GM12878 (cell line): ENCODE measurements at regions of chr1 and their contacts with region 1.

Region 1: DNA sequence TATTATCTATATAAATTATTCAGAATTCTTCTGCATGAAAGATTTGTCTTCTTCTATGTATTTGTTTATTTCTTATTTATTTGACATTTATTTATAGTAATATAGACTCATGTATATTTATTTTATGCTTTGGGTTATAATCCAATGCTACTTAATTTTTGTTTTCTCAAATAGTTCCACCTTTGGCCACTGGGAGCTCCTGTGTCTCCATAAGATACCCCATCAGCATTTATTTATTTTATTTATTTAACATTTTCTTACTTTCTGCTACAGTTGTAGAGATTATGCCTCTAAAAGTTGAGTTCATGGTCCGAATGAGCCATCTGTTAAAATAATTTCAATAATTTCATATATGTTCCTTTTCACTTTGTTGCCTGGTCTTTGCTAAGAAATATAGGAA is 289.4 kb downstream of the ADGRL2 start:
- DNase-seq: no peak
- ATAC-seq: peak; percentile 65
- H3K4me3 ChIP-seq: no peak overlapping the region
- H3K27ac ChIP-seq: no peak overlapping the region
- H3K4me1 ChIP-seq: no peaks in the 10 kb centered on the region
- H3K27me3 ChIP-seq: no peaks in the 10 kb centered on the region
- CTCF ChIP-seq: peak; percentile 18 to 36 (median 24); a peak in 5 of 6 replicates
- EP300 ChIP-seq: no peak
- POLR2A ChIP-seq: no peak
- RAD21 ChIP-seq: peak; percentile 47; the same call in 1 of the 2 replicates

Region 2: DNA sequence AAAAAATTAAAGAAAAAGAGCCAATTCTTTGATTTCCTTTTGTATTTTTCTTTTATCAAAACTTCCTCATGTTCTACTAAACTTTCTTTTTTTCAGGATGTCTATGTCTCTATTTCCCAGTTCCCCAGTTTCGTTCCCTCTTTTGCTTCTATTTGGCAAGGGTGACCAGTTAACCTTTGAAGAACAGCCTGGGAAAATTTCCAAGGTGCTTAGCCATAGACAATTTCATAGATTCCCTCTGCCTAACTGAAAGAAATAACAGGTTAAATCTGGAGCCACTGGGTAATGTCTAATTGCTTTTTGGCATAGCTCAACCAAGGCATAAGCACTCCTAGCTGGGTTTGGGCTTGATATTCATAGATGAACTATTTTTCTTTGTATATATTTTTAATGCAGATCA is 17.0 kb before region 1 on chr1:
- CTCF ChIA-PET with region 1: interaction called, 5 read pairs
- POLR2A ChIA-PET with region 1: no interaction called
- RAD21 ChIA-PET with region 1: interaction called, 5 read pairs
- SMC1A ChIA-PET with region 1: interaction called, 15 read pairs
- in situ Hi-C with region 1: no loop called
- intact Hi-C with region 1: no loop called
- DNase-seq: no peak
- ATAC-seq: no peak
- H3K4me3 ChIP-seq: no peak overlapping the region
- H3K27ac ChIP-seq: no peak overlapping the region
- H3K4me1 ChIP-seq: no peaks in the 10 kb centered on the region
- H3K27me3 ChIP-seq: no peaks in the 10 kb centered on the region
- CTCF ChIP-seq: no peak
- EP300 ChIP-seq: no peak
- POLR2A ChIP-seq: no peak
- RAD21 ChIP-seq: no peak

Region 3: DNA sequence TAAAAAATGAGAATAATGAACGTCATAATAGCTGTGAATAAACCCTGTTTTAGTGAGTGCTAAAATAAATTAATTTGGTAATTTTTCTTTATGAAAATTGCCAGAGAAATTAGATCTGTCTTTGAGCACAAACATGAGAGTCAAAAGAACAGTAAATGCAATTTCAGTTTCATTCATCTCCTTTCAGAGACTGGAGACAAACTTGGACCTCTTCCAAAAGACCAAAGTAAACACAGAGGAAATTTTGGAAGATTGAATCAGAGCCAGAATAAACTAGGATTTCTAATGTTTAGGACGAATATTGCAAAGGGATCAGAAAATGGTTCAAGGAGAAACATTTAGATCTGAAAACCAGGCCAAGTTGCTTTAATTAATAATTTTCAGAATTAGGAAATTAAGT is 20.8 kb after region 1 on chr1:
- CTCF ChIA-PET with region 1: interaction called, 16 read pairs
- POLR2A ChIA-PET with region 1: no interaction called
- RAD21 ChIA-PET with region 1: interaction called, 5 read pairs
- SMC1A ChIA-PET with region 1: interaction called, 51 read pairs
- in situ Hi-C with region 1: no loop called
- intact Hi-C with region 1: no loop called
- DNase-seq: no peak
- ATAC-seq: no peak
- H3K4me3 ChIP-seq: no peak overlapping the region
- H3K27ac ChIP-seq: no peak overlapping the region
- H3K4me1 ChIP-seq: no peaks in the 10 kb centered on the region
- H3K27me3 ChIP-seq: no peaks in the 10 kb centered on the region
- CTCF ChIP-seq: no peak
- EP300 ChIP-seq: no peak
- POLR2A ChIP-seq: no peak
- RAD21 ChIP-seq: no peak

Region 4: GRCh38 chr1:82143108-82143833 is 53.2 kb after region 1 on chr1:
- CTCF ChIA-PET with region 1: interaction called, 3 read pairs
- POLR2A ChIA-PET with region 1: no interaction called
- RAD21 ChIA-PET with region 1: interaction called, 3 read pairs
- SMC1A ChIA-PET with region 1: interaction called, 11 read pairs
- in situ Hi-C with region 1: no loop called
- intact Hi-C with region 1: no loop called
- DNase-seq: no peak
- ATAC-seq: peak; percentile 82
- H3K4me3 ChIP-seq: no peak overlapping the region
- H3K27ac ChIP-seq: no peak overlapping the region
- H3K4me1 ChIP-seq: no peaks in the 10 kb centered on the region
- H3K27me3 ChIP-seq: no peaks in the 10 kb centered on the region
- CTCF ChIP-seq: no peak
- EP300 ChIP-seq: no peak
- POLR2A ChIP-seq: no peak
- RAD21 ChIP-seq: no peak

Region 5: GRCh38 chr1:82161700-82162141 is 71.6 kb after region 1 on chr1:
- CTCF ChIA-PET with region 1: no interaction called
- POLR2A ChIA-PET with region 1: no interaction called
- RAD21 ChIA-PET with region 1: interaction called, 4 read pairs
- SMC1A ChIA-PET with region 1: interaction called, 15 read pairs
- in situ Hi-C with region 1: no loop called
- intact Hi-C with region 1: no loop called
- DNase-seq: no peak
- ATAC-seq: peak; percentile 91
- H3K4me3 ChIP-seq: no peak overlapping the region
- H3K27ac ChIP-seq: no peak overlapping the region
- H3K4me1 ChIP-seq: no peaks in the 10 kb centered on the region
- H3K27me3 ChIP-seq: no peaks in the 10 kb centered on the region
- CTCF ChIP-seq: no peak
- EP300 ChIP-seq: peak in 1 of 2 experiments; percentile 25; a peak in 1 of 4 replicates
- POLR2A ChIP-seq: no peak
- RAD21 ChIP-seq: no peak